ENCODE measurements at regions of chr5 and their contacts with region 1.

Region 1: GRCh38 chr5:62779010-62779422 is 200.4 kb downstream of the LRRC70 start:
- DNase-seq: no peak
- H3K4me3 ChIP-seq: no peak overlapping the region
- H3K27ac ChIP-seq: no peak overlapping the region
- H3K4me1 ChIP-seq: no peaks in the 10 kb centered on the region
- H3K27me3 ChIP-seq: no peaks in the 10 kb centered on the region
- CTCF ChIP-seq: peak; percentile 41 to 69 (median 57)
- EP300 ChIP-seq: no peak
- POLR2A ChIP-seq: no peak

Region 2: GRCh38 chr5:62457071-62457470 is 321.9 kb before region 1 on chr5:
- intact Hi-C with region 1: loop called (anchors 10 kb)
- DNase-seq: no peak
- H3K4me3 ChIP-seq: no peak overlapping the region
- H3K27ac ChIP-seq: no peak overlapping the region
- H3K4me1 ChIP-seq: no peaks in the 10 kb centered on the region
- H3K27me3 ChIP-seq: no peaks in the 10 kb centered on the region
- CTCF ChIP-seq: no peak
- EP300 ChIP-seq: no peak
- POLR2A ChIP-seq: no peak

Region 3: DNA sequence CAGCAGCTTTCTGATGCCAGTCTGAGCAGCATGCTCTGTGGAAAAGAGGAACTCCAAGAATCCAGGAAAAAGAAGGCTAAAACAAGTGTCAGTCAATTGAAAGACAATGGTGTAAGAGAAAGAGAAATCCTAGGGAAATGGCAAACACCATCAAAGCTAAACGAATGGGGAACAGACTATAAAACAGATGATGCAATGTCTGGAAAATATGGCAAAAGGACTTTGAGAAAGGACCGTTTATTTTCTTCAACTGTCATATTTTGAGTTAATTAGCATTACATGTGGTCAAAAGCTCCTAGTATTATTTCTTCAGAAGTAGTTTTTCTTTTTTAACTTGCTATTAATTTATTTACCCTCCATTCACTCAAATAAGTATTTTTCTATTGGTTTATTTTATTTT is 264.8 kb after region 1 on chr5:
- intact Hi-C with region 1: no loop called
- DNase-seq: no peak
- H3K4me3 ChIP-seq: no peak overlapping the region
- H3K27ac ChIP-seq: no peak overlapping the region
- H3K4me1 ChIP-seq: no peaks in the 10 kb centered on the region
- H3K27me3 ChIP-seq: no peaks in the 10 kb centered on the region
- CTCF ChIP-seq: no peak
- EP300 ChIP-seq: no peak
- POLR2A ChIP-seq: no peak